Common myeloid progenitor, CD34-positive (primary cell): ENCODE measurements at regions of chr16 and their contacts with region 1.

Region 1: GRCh38 chr16:53958341-53958880 is 254.5 kb downstream of the FTO start:
- DNase-seq: no peak
- H3K4me3 ChIP-seq: no peak overlapping the region
- H3K27ac ChIP-seq: no peak overlapping the region
- H3K4me1 ChIP-seq: peaks cover 0 to 6% (median 1%) of the 10 kb centered on the region in 4 experiments
- H3K27me3 ChIP-seq: no peaks in the 10 kb centered on the region

Region 2: DNA sequence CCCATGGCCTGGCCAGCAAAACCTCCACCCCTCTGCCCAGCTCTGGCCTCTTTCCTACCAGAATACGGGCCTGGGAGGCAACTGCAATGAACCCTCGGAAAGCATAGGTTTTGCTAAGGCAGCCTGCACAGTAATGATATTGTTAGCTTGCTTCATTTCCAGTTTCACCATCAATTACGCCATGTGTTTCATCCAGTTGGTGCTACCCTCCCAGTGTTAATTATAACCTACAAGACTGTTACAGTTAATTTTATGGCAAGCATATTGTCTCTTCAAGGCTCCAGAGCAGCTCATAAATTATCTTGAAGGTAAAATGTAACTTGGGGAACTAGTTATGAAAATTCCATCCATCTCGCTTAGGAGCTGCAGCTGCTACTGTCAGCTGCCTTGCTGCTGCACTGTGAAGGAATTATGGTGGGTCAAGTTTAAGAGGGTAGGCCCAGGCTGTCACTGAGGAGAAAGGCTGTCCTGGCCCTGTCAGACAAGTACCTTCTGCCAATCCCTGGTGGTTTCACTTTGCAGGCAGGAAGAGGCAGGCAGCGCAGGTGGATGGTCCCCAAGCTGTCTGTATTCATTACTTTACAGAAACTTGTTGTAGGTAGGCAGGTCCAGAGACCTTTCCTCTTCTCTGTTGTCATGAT is 11.5 kb before region 1 on chr16:
- CTCF ChIA-PET with region 1: interaction called, 10 read pairs
- POLR2A ChIA-PET with region 1: no interaction called
- DNase-seq: peak in 1 of 3 donors; percentile 7
- H3K4me3 ChIP-seq: no peak overlapping the region
- H3K27ac ChIP-seq: no peak overlapping the region
- H3K4me1 ChIP-seq: peaks cover 6 to 13% (median 9%) of the 10 kb centered on the region in 4 experiments
- H3K27me3 ChIP-seq: no peaks in the 10 kb centered on the region